SK-N-SH (cell line): ENCODE measurements at regions of chr13 and their contacts with region 1.

Region 1: GRCh38 chr13:51286135-51287002 is 53.1 kb upstream of the SERPINE3 start:
- DNase-seq: peak; percentile 80
- H3K4me3 ChIP-seq: no peak overlapping the region; a peak in 1 of 4 replicates
- H3K27ac ChIP-seq: no peak overlapping the region
- H3K4me1 ChIP-seq: no peaks in the 10 kb centered on the region; a peak in 1 of 4 replicates
- H3K27me3 ChIP-seq: no peaks in the 10 kb centered on the region
- CTCF ChIP-seq: peak; percentile 98
- EP300 ChIP-seq: no peak
- RAD21 ChIP-seq: peak; percentile 95

Region 2: DNA sequence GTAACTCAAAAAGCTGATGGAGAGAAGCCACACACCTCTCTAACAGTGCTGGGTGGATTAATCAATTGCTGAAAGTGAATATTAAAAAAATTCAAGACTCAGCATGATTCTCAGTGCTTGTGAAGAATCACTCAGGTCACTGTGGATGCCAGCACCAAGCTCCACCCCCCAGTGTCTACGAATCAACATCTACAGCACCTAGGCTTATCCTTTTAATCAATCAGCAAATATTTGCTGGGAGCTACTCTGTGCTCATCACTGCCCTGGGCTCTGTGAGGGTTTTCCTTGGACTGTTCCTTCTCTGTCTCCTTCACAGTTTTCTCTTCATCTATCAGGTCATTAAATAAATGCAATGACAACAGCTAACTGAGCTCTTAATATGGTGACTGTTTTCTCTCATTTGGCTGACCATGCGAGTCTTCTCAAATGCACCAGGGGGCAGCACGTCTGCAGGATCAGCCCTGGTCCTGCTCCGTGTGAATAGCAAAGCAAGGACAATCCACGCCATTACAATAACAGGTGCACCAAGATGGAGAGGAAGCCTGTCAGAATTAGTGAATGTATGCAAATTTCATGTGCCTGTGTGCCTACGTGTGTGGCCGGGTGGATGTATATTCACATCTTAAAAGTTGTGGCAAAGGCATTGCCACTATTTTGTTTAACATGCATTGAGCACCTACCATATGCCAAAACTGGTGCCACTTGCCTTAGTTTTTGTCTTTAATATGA is 160.7 kb before region 1 on chr13:
- CTCF ChIA-PET with region 1: interaction called, 105 read pairs
- POLR2A ChIA-PET with region 1: no interaction called
- DNase-seq: peak; percentile 73
- H3K4me3 ChIP-seq: no peak overlapping the region; a peak in 1 of 4 replicates
- H3K27ac ChIP-seq: no peak overlapping the region
- H3K4me1 ChIP-seq: no peaks in the 10 kb centered on the region
- H3K27me3 ChIP-seq: 0 out of 2 replicates have a peak, but pooled peaks cover 13% of the 10 kb centered on the region
- CTCF ChIP-seq: peak; percentile 80
- EP300 ChIP-seq: no peak
- RAD21 ChIP-seq: peak; percentile 93

Region 3: GRCh38 chr13:51162701-51163100 is 123.7 kb before region 1 on chr13:
- CTCF ChIA-PET with region 1: interaction called, 257 read pairs
- POLR2A ChIA-PET with region 1: no interaction called
- DNase-seq: no peak
- H3K4me3 ChIP-seq: no peak overlapping the region
- H3K27ac ChIP-seq: no peak overlapping the region
- H3K4me1 ChIP-seq: no peaks in the 10 kb centered on the region; a peak in 1 of 4 replicates
- H3K27me3 ChIP-seq: no peaks in the 10 kb centered on the region; the same call in 1 of the 2 replicates
- CTCF ChIP-seq: no peak
- EP300 ChIP-seq: no peak
- RAD21 ChIP-seq: no peak

Region 4: DNA sequence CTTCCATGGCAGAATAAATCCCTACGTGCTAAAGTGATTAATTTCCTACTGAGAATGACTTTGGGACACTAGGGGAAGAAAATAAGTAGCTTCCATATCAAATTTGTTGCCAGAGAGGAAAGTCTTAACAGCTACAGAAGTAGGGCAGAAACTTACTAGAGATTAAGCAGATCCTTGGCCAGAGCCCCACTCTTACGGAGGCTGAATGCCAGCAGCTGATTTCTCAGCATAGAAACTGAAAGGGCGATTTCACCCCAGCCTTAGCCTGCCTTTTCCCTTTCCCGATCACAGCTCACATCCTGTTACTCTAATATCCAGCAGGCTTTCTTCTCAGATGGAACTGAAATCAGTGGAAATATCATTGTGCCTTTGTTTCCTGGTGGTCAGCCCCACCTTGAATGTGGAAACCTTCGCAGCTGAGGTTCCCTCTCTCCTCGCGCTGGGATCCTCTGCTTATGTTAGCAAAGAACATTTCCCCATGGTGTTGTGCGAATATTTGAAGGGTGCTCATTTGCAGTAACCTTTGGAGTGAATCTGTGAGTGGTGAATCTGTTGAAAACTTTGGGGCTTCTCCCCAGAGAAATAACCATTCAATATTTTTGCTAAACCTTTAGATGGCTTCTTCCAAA is 55.8 kb before region 1 on chr13:
- CTCF ChIA-PET with region 1: interaction called, 53 read pairs
- POLR2A ChIA-PET with region 1: no interaction called
- DNase-seq: no peak
- H3K4me3 ChIP-seq: no peak overlapping the region; a peak in 1 of 4 replicates
- H3K27ac ChIP-seq: peak overlapping the region; percentile 22 to 50; a peak in 3 of 4 replicates
- H3K4me1 ChIP-seq: peaks cover 6 to 10% of the 10 kb centered on the region in 2 experiments; a peak in 2 of 4 replicates
- H3K27me3 ChIP-seq: no peaks in the 10 kb centered on the region
- CTCF ChIP-seq: no peak
- EP300 ChIP-seq: no peak
- RAD21 ChIP-seq: no peak

Region 5: GRCh38 chr13:51252954-51253532 is 33.3 kb before region 1 on chr13:
- CTCF ChIA-PET with region 1: interaction called, 31 read pairs
- POLR2A ChIA-PET with region 1: no interaction called
- DNase-seq: no peak
- H3K4me3 ChIP-seq: no peak overlapping the region
- H3K27ac ChIP-seq: no peak overlapping the region
- H3K4me1 ChIP-seq: no peaks in the 10 kb centered on the region; a peak in 2 of 4 replicates
- H3K27me3 ChIP-seq: no peaks in the 10 kb centered on the region
- CTCF ChIP-seq: no peak
- EP300 ChIP-seq: no peak
- RAD21 ChIP-seq: no peak

Region 6: DNA sequence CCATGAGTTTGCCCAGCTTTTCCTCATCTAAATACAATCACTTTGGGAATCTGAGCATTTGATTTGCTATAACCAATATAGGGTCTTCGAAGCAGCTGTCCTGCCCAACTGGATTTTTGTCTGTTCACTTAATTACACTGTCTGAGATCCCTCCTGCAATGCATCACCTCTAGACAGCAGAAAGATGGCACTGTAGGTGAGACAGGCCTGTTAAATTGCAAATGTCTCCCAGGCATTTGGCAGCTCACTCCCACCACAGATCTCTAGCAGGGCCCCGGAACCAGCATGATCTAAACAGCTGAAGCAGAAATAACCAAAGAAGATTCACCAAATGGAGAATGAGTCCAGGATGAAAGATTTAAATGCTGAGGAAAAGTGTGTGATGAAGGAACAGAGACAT is 11.2 kb after region 1 on chr13:
- CTCF ChIA-PET with region 1: interaction called, 49 read pairs
- POLR2A ChIA-PET with region 1: no interaction called
- DNase-seq: no peak
- H3K4me3 ChIP-seq: no peak overlapping the region
- H3K27ac ChIP-seq: no peak overlapping the region
- H3K4me1 ChIP-seq: peaks cover 0 to 10% of the 10 kb centered on the region in 2 experiments; a peak in 1 of 4 replicates
- H3K27me3 ChIP-seq: no peaks in the 10 kb centered on the region
- CTCF ChIP-seq: no peak
- EP300 ChIP-seq: no peak
- RAD21 ChIP-seq: peak; percentile 17; the same call in 1 of the 2 replicates

Region 7: DNA sequence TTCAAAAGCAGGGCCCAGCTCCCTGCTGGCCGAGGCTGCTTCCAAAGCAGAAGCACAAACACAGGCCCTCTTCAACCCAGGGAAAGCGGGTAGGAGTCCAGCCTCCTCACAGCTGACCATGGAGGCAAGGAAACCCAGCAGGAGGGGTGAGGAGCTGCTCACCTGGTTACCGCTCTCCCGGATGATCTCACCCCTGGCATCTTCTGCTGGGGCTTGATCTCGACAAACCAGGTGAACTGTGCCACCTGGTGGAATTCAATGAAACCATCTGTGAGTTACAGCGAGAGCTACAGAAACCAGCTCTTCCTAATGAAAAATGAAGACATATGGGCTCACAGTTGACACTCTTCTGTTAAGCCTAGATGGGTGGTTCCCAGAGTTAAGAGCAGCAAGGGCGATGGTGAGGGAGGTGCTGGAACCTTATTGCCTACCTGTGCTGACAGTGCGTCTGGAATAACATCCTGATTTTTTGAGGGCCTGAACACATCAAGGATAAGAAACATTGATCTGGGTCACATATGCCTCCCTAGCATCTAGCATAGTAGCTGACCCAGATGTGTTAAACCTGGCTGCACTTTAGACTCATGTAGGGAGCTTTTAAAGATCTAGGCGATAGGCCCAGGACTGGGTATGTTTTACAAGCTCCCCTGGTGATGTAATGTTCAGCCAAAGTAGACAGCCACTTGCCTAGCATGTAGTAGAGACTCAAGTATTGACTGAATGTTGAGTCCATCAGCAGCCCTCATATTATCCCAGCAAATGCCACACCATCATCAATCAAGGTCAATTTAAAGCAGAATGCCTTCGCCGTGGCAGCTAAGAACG is 511.5 kb after region 1 on chr13:
- CTCF ChIA-PET with region 1: interaction called, 29 read pairs
- POLR2A ChIA-PET with region 1: no interaction called
- DNase-seq: peak; percentile 76
- H3K4me3 ChIP-seq: no peak overlapping the region
- H3K27ac ChIP-seq: peak overlapping the region in 1 of 2 experiments; percentile 50; a peak in 1 of 4 replicates
- H3K4me1 ChIP-seq: peaks cover 19 to 44% of the 10 kb centered on the region in 2 experiments
- H3K27me3 ChIP-seq: no peaks in the 10 kb centered on the region
- CTCF ChIP-seq: peak; percentile 59
- EP300 ChIP-seq: no peak
- RAD21 ChIP-seq: peak; percentile 93

Region 8: GRCh38 chr13:51959773-51960172 is 673.4 kb after region 1 on chr13:
- CTCF ChIA-PET with region 1: no interaction called
- POLR2A ChIA-PET with region 1: no interaction called
- DNase-seq: no peak
- H3K4me3 ChIP-seq: no peak overlapping the region
- H3K27ac ChIP-seq: no peak overlapping the region
- H3K4me1 ChIP-seq: no peaks in the 10 kb centered on the region
- H3K27me3 ChIP-seq: no peaks in the 10 kb centered on the region
- CTCF ChIP-seq: no peak
- EP300 ChIP-seq: no peak
- RAD21 ChIP-seq: no peak